Left cardiac atrium (tissue), 4 donors: ENCODE measurements at regions of chr17 and their contacts with region 1.

Region 1: DNA sequence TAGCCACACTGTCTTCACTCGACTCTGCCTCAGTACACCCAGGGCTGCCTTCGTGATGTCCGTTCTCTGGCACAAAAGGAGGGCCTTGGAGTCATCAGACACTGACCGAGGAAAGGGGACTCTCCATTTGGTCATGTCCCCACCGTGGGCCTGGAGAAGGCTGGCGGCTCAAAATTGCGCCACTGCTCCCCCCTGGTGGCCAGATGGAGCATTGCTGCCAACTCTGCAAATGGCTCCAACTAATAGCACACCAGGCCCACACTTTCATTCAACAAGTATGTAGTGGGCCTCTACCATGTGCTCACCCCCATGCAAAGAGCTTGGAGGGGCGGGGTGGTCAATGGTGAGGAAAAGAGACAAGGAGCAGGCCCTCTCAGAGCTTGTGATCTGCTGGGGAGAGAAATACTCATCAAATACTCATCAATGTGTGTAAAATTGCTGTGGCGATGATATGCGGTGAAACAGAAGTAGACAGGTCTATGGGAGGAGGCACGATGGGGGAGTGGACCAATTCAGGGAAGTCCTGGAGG is 5.2 kb upstream of the GRIN2C start:
- DNase-seq: peak; percentile 77
- ATAC-seq: peak; percentile 28 to 39

Region 2: GRCh38 chr17:74659898-74660297 is 205.0 kb before region 1 on chr17:
- intact Hi-C with region 1: loop called in 1 of 2 experiments (anchors 10 kb)
- DNase-seq: no peak
- ATAC-seq: no peak

Region 3: DNA sequence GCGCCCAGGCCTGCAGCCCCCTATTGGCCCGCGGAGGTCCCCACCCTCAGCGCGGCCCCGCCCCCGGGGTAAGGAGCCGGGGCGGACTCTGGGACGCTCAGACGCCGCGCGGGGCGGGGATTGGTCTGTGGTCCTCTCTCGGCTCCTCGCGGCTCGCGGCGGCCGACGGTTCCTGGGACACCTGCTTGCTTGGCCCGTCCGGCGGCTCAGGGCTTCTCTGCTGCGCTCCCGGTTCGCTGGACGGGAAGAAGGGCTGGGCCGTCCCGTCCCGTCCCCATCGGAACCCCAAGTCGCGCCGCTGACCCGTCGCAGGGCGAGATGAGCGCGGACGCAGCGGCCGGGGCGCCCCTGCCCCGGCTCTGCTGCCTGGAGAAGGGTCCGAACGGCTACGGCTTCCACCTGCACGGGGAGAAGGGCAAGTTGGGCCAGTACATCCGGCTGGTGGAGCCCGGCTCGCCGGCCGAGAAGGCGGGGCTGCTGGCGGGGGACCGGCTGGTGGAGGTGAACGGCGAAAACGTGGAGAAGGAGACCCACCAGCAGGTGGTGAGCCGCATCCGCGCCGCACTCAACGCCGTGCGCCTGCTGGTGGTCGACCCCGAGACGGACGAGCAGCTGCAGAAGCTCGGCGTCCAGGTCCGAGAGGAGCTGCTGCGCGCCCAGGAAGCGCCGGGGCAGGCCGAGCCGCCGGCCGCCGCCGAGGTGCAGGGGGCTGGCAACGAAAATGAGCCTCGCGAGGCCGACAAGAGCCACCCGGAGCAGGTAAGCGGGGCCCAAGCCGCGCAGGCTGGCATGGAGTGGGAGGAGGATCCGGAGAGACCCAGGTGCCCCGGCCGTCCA is 116.2 kb before region 1 on chr17 and contains the start of gene NHERF1:
- intact Hi-C with region 1: loop called in 1 of 2 experiments (anchors 10 kb)
- DNase-seq: peak; percentile 96
- ATAC-seq: peak; percentile 95
- total RNA-seq, gene NHERF1: 15.1 to 18.5 TPM

Region 4: DNA sequence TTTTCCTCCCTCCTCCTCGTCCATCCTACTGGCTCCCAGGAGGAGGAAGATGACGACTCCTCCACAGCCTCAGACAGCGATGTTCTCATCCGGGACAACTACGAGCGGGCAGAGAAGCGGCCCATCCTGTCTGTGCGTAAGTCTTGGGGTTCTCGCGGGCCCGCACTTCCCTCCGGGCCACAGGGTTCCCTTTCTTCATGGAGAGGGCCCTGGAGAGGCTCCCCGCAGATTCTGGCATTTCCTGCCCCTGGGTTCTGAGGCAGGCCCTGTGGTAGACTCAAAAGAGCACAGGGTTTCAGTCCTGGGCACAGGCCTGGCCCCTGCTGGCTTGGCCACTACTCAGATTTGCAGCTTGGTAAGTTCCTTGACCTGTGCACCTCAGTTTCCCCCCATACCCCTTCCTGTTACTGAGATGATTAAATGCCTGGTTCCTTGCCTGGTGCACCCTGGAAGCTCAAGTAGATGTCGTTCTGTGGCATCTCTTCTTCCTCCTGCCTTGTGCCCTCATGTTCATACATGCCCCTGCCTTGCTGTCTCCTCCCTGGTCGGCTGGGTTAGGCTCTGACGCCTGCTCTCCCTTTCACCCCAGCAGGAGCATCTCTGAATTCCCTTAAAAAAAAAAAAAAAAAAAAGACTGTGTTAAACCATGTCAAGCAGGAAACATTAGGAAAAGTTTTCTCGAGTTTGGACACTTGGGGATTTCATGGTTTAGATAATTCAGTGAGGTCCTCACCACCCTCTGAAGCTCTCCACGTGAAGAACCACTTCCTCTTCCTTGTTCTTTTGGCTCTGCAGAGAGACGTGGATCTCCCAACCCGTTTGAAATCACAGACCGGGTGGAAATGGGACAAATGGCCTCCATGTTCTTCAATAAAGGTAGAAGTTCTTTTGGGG is 74.5 kb before region 1 on chr17:
- intact Hi-C with region 1: loop called (anchors 1 to 5 kb)
- DNase-seq: no peak
- ATAC-seq: peak in 1 of 2 donors; percentile 14

Region 5: GRCh38 chr17:74822939-74823367 is 42.0 kb before region 1 on chr17:
- intact Hi-C with region 1: no loop called
- DNase-seq: no peak
- ATAC-seq: peak; percentile 35 to 48

Region 6: GRCh38 chr17:74842599-74843351 is 22.2 kb before region 1 on chr17:
- intact Hi-C with region 1: loop called in 1 of 2 experiments (anchors 2 kb)
- DNase-seq: peak; percentile 87
- ATAC-seq: peak; percentile 83 to 86

Region 7: GRCh38 chr17:74893936-74894671 is 29.2 kb after region 1 on chr17:
- intact Hi-C with region 1: no loop called
- DNase-seq: no peak
- ATAC-seq: no peak